ENCODE measurements at regions of chr7 and their contacts with region 1.

Region 1: DNA sequence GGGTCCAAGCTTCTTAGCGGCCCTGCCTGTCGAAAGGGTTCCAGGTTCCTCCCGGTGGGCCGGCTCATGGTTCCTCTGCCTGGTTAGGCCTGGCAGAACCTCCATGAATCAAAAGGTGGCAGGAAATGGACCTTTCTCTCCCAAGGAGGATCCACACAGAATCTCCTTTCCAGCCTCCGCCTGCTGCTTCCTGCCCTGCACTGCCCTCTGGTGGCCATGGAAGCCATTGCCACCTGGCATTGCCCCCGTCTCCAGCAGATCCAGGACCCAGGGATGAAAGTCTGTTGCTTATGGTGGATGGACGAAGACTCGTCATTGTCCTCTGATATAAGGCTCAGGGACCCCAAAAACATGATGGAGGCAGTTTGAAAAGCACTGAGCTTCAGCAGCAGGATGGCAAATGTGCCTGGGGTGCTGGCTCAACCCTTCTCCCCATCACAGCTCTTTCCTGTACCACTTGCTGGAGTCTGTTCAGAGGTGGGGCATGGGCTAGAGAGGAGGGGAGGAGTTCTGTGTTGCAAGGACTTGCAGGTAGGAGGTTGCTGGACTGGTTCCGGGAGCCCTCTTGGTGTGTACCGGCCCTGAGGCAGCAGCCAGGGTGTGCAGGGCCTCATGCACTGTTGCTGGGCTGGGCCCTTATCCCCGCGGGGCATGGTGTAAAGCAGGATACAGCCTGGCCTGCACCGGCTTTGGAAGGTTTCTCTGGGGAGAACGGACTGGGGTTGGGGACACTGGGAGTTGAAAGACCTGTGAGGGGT is 11.3 kb upstream of the INMT start:
- DNase-seq: peak; percentile 82
- ATAC-seq: peak; percentile 71
- H3K4me3 Mint-ChIP-seq: no peak overlapping the region
- H3K27ac Mint-ChIP-seq: no peak overlapping the region
- H3K4me1 Mint-ChIP-seq: peaks cover 31% of the 10 kb centered on the region
- H3K27me3 Mint-ChIP-seq: no peaks in the 10 kb centered on the region

Region 2: GRCh38 chr7:30548762-30549344 is 191.8 kb before region 1 on chr7:
- CTCF ChIA-PET with region 1: interaction called, 48 read pairs
- POLR2A ChIA-PET with region 1: no interaction called
- DNase-seq: peak; percentile 47
- ATAC-seq: peak; percentile 42
- H3K4me3 Mint-ChIP-seq: no peak overlapping the region
- H3K27ac Mint-ChIP-seq: no peak overlapping the region
- H3K4me1 Mint-ChIP-seq: no peaks in the 10 kb centered on the region
- H3K27me3 Mint-ChIP-seq: no peaks in the 10 kb centered on the region

Region 3: GRCh38 chr7:30612658-30613265 is 127.8 kb before region 1 on chr7:
- CTCF ChIA-PET with region 1: interaction called, 10 read pairs
- POLR2A ChIA-PET with region 1: interaction called, 3 read pairs
- DNase-seq: no peak
- ATAC-seq: no peak
- H3K4me3 Mint-ChIP-seq: no peak overlapping the region
- H3K27ac Mint-ChIP-seq: peak overlapping the region; percentile 44
- H3K4me1 Mint-ChIP-seq: peaks cover 19% of the 10 kb centered on the region
- H3K27me3 Mint-ChIP-seq: no peaks in the 10 kb centered on the region

Region 4: GRCh38 chr7:30682212-30683083 is 58.2 kb before region 1 on chr7 and contains the start of gene CRHR2:
- CTCF ChIA-PET with region 1: interaction called, 58 read pairs
- POLR2A ChIA-PET with region 1: interaction called, 3 read pairs
- DNase-seq: peak; percentile 36
- ATAC-seq: peak; percentile 80
- H3K4me3 Mint-ChIP-seq: peak within 1 kb of the TSS; percentile 52
- H3K27ac Mint-ChIP-seq: no peak within 1 kb of the TSS
- H3K4me1 Mint-ChIP-seq: peaks cover 11% of the 10 kb centered on the region
- H3K27me3 Mint-ChIP-seq: peaks cover 66% of the 10 kb centered on the region
- total RNA-seq, gene CRHR2: not detected

Region 5: DNA sequence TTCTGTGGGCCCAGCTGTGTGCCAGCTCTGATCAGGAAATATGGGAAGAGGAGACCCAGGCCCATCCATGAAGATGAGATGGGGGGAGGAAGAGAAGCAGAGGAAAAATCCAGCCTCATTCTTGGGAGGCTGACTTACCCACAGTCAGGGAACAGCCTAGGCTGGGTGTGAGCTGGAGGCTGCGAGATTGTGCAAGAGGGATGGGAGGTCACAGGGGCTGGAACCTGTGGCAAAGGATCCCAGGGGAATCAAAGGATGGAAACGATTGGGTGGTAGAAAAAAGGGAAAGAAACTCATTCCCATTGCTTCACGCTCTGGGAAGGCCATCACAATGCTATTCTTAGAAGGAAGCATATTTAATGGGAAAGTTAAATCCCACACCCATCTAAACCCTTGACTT is 31.6 kb before region 1 on chr7:
- CTCF ChIA-PET with region 1: interaction called, 79 read pairs
- POLR2A ChIA-PET with region 1: interaction called, 6 read pairs
- DNase-seq: no peak
- ATAC-seq: no peak
- H3K4me3 Mint-ChIP-seq: no peak overlapping the region
- H3K27ac Mint-ChIP-seq: no peak overlapping the region
- H3K4me1 Mint-ChIP-seq: no peaks in the 10 kb centered on the region
- H3K27me3 Mint-ChIP-seq: no peaks in the 10 kb centered on the region

Region 6: DNA sequence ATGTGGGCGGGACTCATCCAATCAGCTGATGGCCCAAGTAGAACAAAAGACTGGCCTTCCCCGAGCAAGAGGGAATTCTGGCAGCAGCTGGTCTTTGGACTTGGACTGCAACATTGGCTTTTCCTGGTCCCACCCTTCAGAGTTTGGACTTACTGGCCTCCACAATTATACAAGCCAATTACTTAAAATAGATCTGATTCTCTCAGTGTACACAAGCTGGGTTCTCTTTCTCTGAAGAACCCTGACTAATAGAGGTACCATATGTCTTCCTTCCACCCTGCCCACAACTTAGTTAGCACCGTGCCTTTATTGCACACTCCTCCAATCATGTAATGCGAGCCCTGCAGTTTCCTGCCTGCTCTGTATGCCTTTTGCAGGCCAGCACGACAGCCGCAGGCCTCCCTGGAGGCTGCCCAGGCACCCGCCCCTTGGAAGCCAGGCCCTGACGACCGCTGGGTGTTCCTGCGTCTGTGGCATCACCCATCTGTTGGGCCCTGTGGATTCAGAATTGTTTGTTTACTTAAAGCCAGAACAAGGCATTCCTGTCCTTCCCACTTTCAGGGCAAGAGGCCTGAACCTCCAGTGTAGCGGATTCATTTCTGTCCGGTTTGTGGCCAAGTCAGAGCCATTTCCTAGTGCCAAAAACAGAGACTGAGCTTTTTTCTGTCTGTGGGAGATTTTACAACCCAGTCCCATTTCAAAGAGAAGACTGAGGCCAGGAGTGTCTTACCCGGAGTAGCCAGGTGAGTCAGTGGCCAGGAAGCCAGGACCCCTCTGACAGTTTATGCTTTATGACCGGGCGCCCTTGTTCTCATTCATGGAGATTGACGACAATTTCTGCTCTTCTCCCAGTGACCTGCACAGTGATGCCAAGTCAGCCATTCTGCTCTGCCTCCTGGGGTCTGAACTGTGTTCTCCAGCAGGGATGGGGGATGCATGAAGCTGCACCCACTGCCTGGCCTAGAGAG is 10.4 kb after region 1 on chr7:
- CTCF ChIA-PET with region 1: interaction called, 12 read pairs
- POLR2A ChIA-PET with region 1: no interaction called
- DNase-seq: no peak
- ATAC-seq: no peak
- H3K4me3 Mint-ChIP-seq: no peak overlapping the region
- H3K27ac Mint-ChIP-seq: no peak overlapping the region
- H3K4me1 Mint-ChIP-seq: no peaks in the 10 kb centered on the region
- H3K27me3 Mint-ChIP-seq: peaks cover 2% of the 10 kb centered on the region

Measured in activated CD8-positive, alpha-beta T cell treated with anti-CD3 and anti-CD28 coated beads, Interleukin-2, amount 10 ng/mL, durations not matched to agents 7 days and 5 days (primary cell).